ENCODE measurements at regions of chr7 and their contacts with region 1.

Region 1: DNA sequence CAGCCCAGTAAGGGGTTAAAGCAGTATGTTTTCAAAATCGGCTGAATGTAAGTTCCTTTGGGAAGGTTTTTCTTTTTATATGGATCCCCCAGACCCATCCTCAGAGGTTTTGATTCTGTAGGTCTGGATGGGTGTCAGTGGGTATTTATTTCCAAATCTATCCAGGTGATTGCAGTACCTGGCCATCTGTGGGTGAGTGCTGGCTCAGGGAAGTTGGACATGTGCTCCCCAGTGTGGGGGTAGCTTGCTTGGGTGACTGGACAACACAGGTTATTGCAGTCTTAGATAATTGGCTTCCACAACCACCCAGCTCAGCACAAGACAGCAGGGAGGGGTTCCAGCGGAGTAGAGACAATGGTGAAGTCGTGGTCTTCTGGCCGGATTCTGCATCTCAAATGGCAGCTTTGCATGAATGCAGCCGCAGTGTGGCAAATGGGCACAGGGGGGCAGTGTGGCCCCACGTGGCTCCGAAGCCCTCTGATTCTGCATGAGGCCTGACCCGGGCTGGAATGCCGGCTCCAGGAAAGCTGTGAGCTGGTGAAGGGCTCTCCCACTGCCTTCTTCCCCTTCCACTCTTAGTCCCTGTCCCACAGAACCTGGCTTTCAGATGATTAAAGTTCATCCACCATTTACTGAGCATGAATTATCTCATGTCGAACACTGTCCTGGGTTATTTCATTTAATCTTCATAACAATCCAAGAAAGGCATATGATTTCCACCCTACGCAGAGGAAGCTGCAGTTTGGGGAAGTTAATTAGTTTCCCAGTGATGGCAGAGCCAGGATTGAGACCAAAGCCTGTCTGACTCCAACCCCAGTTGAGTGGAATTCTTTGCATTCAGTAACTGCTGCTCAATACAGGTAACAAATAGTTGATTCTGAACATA is 64.5 kb upstream of the SYPL1 start:
- DNase-seq: peak; percentile 73
- H3K4me3 Mint-ChIP-seq: no peak overlapping the region
- H3K27ac Mint-ChIP-seq: no peak overlapping the region
- H3K4me1 Mint-ChIP-seq: peaks cover 2% of the 10 kb centered on the region
- H3K27me3 Mint-ChIP-seq: peaks cover 18% of the 10 kb centered on the region

Region 2: DNA sequence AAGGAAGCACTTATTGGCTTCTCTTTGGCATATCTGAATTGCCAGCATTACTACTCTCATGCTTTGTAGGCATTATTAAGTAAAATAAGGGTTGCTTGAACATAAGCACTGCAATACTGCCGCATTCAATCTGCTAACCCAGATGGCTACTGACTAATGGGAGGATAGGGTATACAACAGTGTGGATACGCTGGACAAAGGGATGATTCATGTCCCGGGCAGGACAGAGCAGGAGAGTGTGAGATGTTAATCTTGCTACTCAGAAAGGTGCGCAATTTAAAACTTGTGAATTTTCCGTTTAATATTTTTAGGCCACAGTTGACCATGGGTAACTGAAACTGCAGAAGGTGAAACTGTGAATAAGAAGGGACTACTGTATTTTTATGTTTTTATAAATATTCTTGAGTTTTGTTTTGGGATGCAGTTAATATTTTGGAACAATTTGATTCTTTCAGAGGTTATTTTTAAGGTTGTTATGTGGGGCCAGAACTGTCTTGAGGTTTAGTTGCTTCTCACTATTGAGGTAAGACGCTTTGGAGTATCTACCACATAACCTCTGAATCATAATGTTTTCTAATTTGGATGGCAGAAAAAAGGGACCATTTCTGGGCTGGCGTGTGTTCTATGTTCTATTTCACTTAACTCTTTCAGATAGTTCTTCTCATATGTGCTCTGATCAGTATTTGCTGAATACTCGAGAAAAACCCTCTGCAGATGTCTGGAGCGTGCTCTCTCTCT is 11.1 kb after region 1 on chr7:
- CTCF ChIA-PET with region 1: no interaction called
- POLR2A ChIA-PET with region 1: no interaction called
- DNase-seq: no peak
- H3K4me3 Mint-ChIP-seq: no peak overlapping the region
- H3K27ac Mint-ChIP-seq: no peak overlapping the region
- H3K4me1 Mint-ChIP-seq: peaks cover 3% of the 10 kb centered on the region
- H3K27me3 Mint-ChIP-seq: peaks cover 21% of the 10 kb centered on the region

Region 3: GRCh38 chr7:106461993-106462859 is 285.6 kb after region 1 on chr7:
- CTCF ChIA-PET with region 1: interaction called, 147 read pairs
- POLR2A ChIA-PET with region 1: interaction called, 4 read pairs
- DNase-seq: no peak
- H3K4me3 Mint-ChIP-seq: no peak overlapping the region
- H3K27ac Mint-ChIP-seq: no peak overlapping the region
- H3K4me1 Mint-ChIP-seq: peaks cover 2% of the 10 kb centered on the region
- H3K27me3 Mint-ChIP-seq: no peaks in the 10 kb centered on the region

Region 4: GRCh38 chr7:106504645-106505044 is 328.0 kb after region 1 on chr7:
- CTCF ChIA-PET with region 1: no interaction called
- POLR2A ChIA-PET with region 1: no interaction called
- DNase-seq: no peak
- H3K4me3 Mint-ChIP-seq: no peak overlapping the region
- H3K27ac Mint-ChIP-seq: no peak overlapping the region
- H3K4me1 Mint-ChIP-seq: no peaks in the 10 kb centered on the region
- H3K27me3 Mint-ChIP-seq: peaks cover 5% of the 10 kb centered on the region

Measured in activated CD4-positive, alpha-beta memory T cell treated with anti-CD3 and anti-CD28 coated beads, Interleukin-2, amount 10 ng/mL, durations not matched to agents 7 days and 5 days (primary cell).